ENCODE measurements at regions of chr11 and their contacts with region 1.

Region 1: GRCh38 chr11:128956401-128957201 is 13.9 kb upstream of the TP53AIP1 start:
- DNase-seq: peak; percentile 61 to 64 (median 64)
- H3K4me3 ChIP-seq: no peak overlapping the region
- H3K27ac ChIP-seq: no peak overlapping the region
- H3K4me1 ChIP-seq: no peaks in the 10 kb centered on the region
- H3K27me3 ChIP-seq: peaks cover 0 to 7% (median 0%) of the 10 kb centered on the region in 5 experiments

Region 2: GRCh38 chr11:128874427-128874826 is 82.2 kb before region 1 on chr11:
- CTCF ChIA-PET with region 1: interaction called, 61 read pairs
- POLR2A ChIA-PET with region 1: no interaction called
- DNase-seq: no peak
- H3K4me3 ChIP-seq: no peak overlapping the region
- H3K27ac ChIP-seq: no peak overlapping the region
- H3K4me1 ChIP-seq: no peaks in the 10 kb centered on the region
- H3K27me3 ChIP-seq: peaks cover 0 to 12% (median 0%) of the 10 kb centered on the region in 5 experiments

Region 3: DNA sequence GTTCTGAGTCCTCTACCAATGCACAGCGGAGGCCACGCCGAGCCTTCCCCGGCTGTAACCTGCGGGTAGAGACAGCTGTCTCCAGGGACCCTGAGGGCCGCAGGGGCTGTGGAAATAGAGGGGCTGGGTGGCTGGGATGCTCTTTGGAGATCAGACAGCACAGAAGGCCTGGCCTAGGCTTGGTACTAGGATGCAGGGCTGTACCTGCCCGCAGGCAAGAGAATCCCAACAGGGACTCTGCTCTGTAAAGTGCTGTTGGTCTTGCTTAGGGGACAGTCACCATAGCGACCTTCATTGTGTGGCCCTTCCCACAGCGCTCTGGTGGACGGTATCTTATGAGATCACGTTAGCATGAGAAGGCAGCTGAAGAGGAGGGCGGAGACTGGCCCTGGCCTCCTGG is 76.8 kb before region 1 on chr11:
- CTCF ChIA-PET with region 1: interaction called, 640 read pairs
- POLR2A ChIA-PET with region 1: no interaction called
- DNase-seq: no peak
- H3K4me3 ChIP-seq: no peak overlapping the region
- H3K27ac ChIP-seq: no peak overlapping the region
- H3K4me1 ChIP-seq: no peaks in the 10 kb centered on the region
- H3K27me3 ChIP-seq: peaks cover 0 to 10% (median 7%) of the 10 kb centered on the region in 5 experiments

Region 4: DNA sequence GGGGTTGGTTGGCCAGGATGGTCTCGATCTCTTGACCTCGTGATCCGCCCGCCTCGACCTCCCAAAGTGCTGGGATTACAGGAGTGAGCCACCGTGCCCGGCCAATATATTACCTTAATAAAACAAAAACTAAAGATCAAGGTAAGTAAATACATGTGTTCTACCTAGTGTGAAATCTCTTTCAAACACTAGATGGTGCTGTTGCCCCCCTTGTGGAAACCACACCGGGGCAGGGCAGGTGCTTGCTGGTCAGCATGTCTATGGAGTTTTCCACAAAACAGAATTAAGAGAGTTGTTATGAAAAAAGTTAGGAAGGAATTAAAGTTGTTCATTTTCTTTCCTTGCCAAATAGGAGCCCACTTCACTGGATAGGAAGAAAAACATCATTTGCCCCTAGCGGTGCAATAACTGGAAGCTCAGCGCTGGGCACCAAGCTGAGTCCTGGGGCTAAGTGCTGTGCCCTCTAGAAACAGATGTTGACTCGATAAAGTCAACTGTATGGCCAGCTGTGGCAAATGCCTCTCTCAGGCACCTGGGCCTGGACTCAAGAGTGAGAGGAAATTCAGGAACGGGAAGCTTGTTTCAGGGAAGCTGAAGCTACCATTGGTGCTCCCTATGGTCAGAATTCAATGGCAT is 71.8 kb before region 1 on chr11:
- CTCF ChIA-PET with region 1: interaction called, 640 read pairs
- POLR2A ChIA-PET with region 1: no interaction called
- DNase-seq: peak; percentile 74 to 81 (median 74)
- H3K4me3 ChIP-seq: no peak overlapping the region
- H3K27ac ChIP-seq: no peak overlapping the region
- H3K4me1 ChIP-seq: peaks cover 0 to 7% (median 0%) of the 10 kb centered on the region in 4 experiments
- H3K27me3 ChIP-seq: peaks cover 3 to 28% (median 24%) of the 10 kb centered on the region in 5 experiments

Region 5: DNA sequence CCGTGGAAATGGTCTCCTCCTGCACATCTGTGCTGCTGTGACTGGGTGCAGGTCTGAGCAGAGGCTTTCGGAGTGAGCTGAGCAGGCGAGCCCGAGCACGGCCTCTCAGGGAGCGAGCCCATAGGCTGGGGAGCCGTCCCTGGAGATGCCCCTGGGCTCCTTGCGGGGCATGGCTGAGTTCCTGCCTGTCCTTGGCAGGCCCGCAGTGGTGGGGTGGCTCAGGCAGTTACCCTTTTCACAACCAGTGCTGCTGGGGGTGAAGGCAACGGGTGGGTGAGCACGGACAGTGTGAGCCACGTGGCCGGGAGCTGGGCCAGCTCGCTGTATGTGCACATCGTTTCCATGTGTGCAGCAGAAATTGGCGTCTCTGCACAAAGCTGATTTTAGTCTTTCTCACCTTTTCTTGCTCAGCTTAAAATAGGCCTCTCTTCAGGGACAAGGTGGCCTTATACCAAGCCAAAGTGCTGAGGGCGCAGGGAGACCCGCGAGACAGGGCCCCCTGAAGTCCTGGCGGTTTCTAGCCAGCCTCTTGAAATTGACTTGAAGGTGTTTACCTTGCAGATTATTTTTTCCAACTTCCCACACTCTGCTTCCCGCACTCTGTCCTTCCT is 13.7 kb before region 1 on chr11 and contains the start of gene TP53AIP1:
- CTCF ChIA-PET with region 1: interaction called, 35 read pairs
- POLR2A ChIA-PET with region 1: no interaction called
- DNase-seq: no peak
- H3K4me3 ChIP-seq: no peak within 1 kb of the TSS
- H3K27ac ChIP-seq: no peak within 1 kb of the TSS
- H3K4me1 ChIP-seq: no peaks in the 10 kb centered on the region
- H3K27me3 ChIP-seq: peaks cover 0 to 5% (median 0%) of the 10 kb centered on the region in 5 experiments

Region 6: DNA sequence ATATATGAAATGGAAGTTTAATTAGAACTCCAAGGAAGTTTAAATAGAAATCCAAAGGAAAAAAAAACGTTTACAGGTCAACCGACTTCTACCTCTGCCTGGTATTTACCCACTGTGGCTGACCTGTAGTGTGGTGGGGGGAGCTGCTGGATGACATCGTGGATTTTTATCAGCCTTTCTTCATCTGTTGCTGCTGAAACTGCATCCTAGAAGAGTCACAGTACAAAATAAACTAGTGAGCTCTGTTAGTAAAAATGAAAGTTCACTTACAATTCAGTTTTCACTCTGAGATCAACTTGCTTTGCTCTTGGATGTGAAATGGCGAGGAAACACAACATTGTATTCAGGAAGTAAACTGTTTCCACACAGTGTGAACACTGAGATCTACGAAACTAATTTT is 29.3 kb after region 1 on chr11:
- CTCF ChIA-PET with region 1: no interaction called
- POLR2A ChIA-PET with region 1: no interaction called
- DNase-seq: peak in 1 of 3 donors; percentile 2
- H3K4me3 ChIP-seq: no peak overlapping the region
- H3K27ac ChIP-seq: no peak overlapping the region
- H3K4me1 ChIP-seq: no peaks in the 10 kb centered on the region
- H3K27me3 ChIP-seq: no peaks in the 10 kb centered on the region

Measured in common myeloid progenitor, CD34-positive (primary cell).